ENCODE measurements at regions of chr4 and their contacts with region 1.

Region 1: GRCh38 chr4:114399105-114399504 is 199.5 kb upstream of the UGT8 start:
- DNase-seq: peak in 1 of 3 donors; percentile 24
- ATAC-seq: no peak
- H3K4me3 ChIP-seq: no peak overlapping the region
- H3K4me1 ChIP-seq: peaks cover 10% of the 10 kb centered on the region
- CTCF ChIP-seq: no peak

Region 2: DNA sequence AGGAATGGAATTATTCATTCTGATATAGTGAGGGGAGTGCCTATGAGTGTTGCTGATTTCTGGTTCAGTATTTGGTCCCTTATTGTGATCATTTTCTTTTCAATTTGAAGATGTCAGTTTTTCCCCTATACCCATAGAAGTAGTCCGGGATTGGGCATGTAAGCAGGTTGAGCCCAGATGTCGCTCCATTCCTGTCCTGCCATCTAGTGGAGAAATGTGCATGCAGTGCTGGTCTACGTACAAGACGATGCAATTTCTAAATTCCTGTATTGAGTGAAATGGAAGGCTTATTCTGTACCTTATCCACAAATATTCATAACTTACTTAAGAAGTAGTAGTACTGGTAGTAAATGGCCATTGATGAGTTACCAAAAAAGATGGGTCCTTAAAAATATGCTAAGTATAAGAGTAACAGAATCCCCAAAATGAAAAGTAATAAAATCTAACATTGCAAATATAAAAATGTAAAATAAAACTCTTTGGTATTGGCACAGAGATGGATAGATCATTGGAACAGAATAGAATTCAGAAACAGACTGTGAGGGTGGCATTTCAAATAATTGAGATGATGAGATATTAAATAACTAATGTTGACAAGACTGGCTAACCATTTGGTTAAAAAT is 260.4 kb after region 1 on chr4:
- intact Hi-C with region 1: loop called in 1 of 2 experiments (anchors 5 kb)
- DNase-seq: peak in 2 of 3 donors; percentile 54 to 87
- ATAC-seq: peak; percentile 94
- H3K4me3 ChIP-seq: no peak overlapping the region
- H3K4me1 ChIP-seq: peaks cover 7% of the 10 kb centered on the region
- CTCF ChIP-seq: peak; percentile 66

Measured in mucosa of descending colon (tissue), 3 donors.